ENCODE measurements at regions of chr14 and their contacts with region 1.

Region 1: DNA sequence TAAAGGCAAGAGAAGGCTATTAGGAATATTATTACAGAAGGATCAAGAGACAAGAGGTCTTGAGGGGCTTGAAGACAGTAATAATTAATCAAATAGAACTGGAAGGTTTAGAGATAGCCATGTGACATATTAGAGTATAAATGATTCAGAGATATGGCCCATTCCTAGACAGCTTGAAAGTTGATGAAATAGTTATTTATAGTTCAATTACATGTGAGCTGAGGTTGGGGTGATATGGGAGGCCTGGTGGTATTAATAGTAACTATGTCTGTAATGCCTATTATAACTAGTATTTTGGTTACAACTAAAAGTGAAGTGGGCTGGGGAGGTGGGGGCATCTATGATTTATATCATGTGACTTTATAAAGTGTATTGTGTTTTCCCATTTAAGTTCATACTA is 14.1 kb upstream of the MIS18BP1 start:
- DNase-seq: no peak
- H3K4me3 Mint-ChIP-seq: no peak overlapping the region
- H3K27ac Mint-ChIP-seq: no peak overlapping the region
- H3K4me1 Mint-ChIP-seq: peaks cover 5% of the 10 kb centered on the region
- H3K27me3 Mint-ChIP-seq: peaks cover 7% of the 10 kb centered on the region

Region 2: DNA sequence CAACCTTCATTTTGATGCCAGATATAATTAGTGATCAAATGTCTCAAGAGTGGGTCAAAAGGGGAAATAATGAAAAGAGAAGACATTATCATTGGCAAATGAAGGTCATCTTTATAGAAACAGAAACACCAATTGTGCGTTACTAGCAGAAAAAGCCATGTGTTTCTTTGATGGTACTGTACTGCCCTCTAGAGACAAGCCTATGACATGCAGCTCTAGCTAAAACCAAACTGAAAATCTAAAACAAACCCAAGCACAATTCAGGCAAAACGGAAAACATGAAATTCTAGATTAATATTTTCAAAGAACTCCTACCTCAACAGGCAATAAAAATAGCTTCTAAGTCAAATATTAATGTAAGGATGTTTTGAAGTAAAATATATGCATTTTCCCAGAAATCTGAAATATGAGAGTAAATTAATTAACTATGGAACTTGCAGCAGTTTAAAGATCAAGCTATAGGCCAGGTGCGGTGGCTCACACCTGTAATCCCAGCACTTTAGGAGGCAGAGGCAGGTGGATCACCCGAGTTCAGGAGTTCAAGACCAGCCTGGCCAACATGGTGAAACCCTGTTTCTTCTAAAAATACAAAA is 420.7 kb before region 1 on chr14:
- intact Hi-C with region 1: loop called (anchors 5 kb)
- DNase-seq: no peak
- H3K4me3 Mint-ChIP-seq: no peak overlapping the region
- H3K27ac Mint-ChIP-seq: no peak overlapping the region
- H3K4me1 Mint-ChIP-seq: no peaks in the 10 kb centered on the region
- H3K27me3 Mint-ChIP-seq: peaks cover 8% of the 10 kb centered on the region

Region 3: DNA sequence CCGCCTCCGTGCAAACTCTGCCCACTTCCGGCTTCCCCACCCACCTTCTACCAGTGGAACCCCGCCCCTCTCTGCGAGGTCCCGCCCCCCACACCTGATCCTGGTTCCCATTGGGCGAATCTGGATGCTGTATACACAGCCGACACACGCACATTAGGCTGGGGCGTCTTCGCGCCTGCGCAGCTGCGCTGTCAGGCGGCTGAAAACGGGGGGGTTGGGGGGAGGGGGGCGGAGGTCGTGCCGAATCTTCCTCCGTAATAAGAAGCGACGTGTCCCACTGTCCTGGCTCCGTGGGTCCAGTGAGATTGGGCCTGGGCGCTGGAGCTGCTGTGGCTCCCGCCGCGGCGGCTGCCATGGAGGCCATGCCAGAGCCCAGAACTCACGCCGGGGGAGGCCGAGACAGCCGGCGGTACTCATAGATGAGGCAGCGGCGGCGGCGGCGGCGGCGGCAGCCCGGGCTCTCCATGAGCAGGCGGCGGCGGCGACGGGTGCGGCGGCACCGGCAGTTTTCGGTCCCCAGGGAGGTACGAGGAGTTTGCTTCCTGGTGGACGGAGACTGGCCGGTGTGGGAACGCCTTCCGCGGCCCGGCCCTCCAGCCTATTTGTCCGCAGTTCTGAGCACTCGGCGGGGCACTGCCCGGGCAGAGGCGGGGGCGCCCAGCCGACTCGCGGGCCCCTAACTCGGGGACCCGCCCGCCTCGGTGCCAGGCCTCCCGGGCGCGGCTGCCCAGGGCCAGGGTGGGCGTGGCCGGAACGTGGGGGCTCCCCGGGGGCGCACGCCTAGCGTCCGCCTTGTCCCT is 369.8 kb before region 1 on chr14:
- intact Hi-C with region 1: loop called (anchors 5 kb)
- DNase-seq: peak; percentile 85
- H3K4me3 Mint-ChIP-seq: peak overlapping the region; percentile 93
- H3K27ac Mint-ChIP-seq: peak overlapping the region; percentile 72
- H3K4me1 Mint-ChIP-seq: peaks cover 24% of the 10 kb centered on the region
- H3K27me3 Mint-ChIP-seq: peaks cover 6% of the 10 kb centered on the region

Region 4: GRCh38 chr14:44912041-44912869 is 354.8 kb before region 1 on chr14:
- intact Hi-C with region 1: loop called (anchors 1 kb)
- DNase-seq: no peak
- H3K4me3 Mint-ChIP-seq: peak overlapping the region; percentile 45
- H3K27ac Mint-ChIP-seq: no peak overlapping the region
- H3K4me1 Mint-ChIP-seq: peaks cover 10% of the 10 kb centered on the region
- H3K27me3 Mint-ChIP-seq: peaks cover 29% of the 10 kb centered on the region

Region 5: DNA sequence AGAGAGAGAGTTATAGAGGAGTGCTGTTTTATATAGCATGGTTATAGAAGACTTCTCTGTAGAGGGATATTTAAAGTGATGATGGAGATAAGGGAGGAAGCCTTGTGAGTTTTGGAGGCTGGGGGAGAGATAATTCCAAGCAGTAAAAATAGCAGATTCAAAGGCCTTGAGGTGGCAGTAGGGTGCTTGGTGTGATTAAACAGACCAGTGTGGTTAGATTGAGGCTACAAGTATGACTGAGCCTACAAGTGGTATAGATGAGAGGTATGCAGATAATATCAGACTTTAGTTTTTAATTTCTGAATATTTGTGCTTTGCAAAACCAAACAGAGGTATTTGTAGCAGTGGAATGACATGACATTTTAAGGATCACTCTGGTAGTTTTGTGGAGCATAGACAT is 111.0 kb before region 1 on chr14:
- intact Hi-C with region 1: loop called (anchors 1 kb)
- DNase-seq: no peak
- H3K4me3 Mint-ChIP-seq: no peak overlapping the region
- H3K27ac Mint-ChIP-seq: no peak overlapping the region
- H3K4me1 Mint-ChIP-seq: peaks cover 8% of the 10 kb centered on the region
- H3K27me3 Mint-ChIP-seq: no peaks in the 10 kb centered on the region

Region 6: DNA sequence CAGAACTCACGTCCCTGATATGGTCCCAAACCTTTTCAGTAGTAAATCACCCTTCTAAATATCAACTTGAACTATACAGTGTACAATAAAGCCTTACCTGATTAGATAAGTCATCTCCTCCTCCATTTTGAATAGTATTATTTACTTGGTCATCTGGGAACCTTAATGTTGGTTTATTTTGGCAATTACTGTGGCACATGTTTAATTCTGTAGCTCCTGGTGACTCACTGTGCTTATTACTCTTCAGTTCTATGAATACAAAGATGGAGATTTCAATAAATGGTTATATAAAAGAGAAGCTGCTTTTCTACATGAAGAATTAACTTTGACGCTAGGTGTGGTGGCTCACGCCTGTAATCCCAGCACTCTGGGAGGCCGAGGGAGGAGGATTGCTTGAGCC is 39.5 kb before region 1 on chr14:
- intact Hi-C with region 1: no loop called
- DNase-seq: no peak
- H3K4me3 Mint-ChIP-seq: no peak overlapping the region
- H3K27ac Mint-ChIP-seq: no peak overlapping the region
- H3K4me1 Mint-ChIP-seq: peaks cover 34% of the 10 kb centered on the region
- H3K27me3 Mint-ChIP-seq: no peaks in the 10 kb centered on the region

Measured in activated T-helper 1 cell treated with anti-CD3 and anti-CD28 coated beads, Interleukin-12 subunit alpha, Interleukin-12 subunit beta, Interleukin-2, Interleukin-4 antibody, amounts not matched to agents 30 ng/mL and 10 ng/mL and 1 ng/mL, durations not matched to agents 14 hours and 24 hours and 36 hours (primary cell).